ENCODE measurements at regions of chr10 and their contacts with region 1.

Region 1: DNA sequence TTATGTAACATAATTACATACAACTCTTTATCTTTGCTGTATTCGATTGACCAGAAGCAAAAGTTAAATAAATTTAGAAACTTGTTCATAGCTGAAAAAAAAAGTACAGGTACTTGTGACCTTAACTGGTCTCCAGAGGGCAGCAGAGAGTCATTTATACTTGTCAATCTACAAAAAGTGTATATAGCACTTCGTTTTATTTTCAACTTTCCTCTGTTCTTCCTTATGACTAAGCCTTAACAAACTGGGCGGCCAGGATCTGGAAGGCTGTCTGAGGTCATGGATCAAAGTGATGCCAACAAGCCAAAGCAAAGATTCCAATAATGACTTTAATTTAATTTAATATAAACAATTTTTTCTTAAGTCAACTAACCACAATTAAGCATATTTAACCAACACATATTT is 29.8 kb downstream of the C10orf67 start:
- DNase-seq: peak; percentile 67
- H3K4me3 Mint-ChIP-seq: no peak overlapping the region
- H3K27ac Mint-ChIP-seq: no peak overlapping the region
- H3K4me1 Mint-ChIP-seq: no peaks in the 10 kb centered on the region
- H3K27me3 Mint-ChIP-seq: no peaks in the 10 kb centered on the region
- CTCF ChIP-seq: peak; percentile 34

Region 2: DNA sequence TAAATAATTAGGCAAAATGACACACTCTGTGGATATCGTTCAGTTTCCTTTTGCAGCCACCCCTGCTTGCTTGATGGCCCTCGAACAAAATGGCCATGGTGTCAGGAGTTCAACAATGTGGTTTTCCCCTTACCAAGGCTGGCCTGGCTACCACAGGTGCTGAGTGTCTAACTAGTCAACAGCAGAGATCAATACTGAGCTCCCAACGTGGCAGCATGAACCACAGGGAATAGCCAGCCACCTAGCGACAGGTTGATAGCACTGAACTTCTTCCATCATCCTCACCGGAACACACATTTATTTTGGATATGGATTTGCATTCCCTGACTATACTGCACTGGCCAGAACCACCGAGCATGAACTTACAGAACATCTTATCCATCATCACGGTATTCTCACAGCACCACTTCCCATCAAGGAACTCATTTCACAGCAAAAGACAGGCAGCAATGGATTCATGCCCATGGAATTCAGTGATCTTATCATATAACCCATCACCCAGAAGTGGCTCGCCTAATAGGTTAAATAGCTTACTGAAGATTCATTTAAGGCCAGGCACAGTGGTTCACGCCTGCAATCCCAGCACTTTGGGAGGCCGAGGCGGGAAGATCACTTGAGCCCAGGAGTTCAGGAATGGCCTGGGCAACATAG is 23.5 kb after region 1 on chr10:
- CTCF ChIA-PET with region 1: interaction called, 4 read pairs
- intact Hi-C with region 1: loop called (anchors 2 kb)
- DNase-seq: peak; percentile 69
- H3K4me3 Mint-ChIP-seq: no peak overlapping the region
- H3K27ac Mint-ChIP-seq: no peak overlapping the region
- H3K4me1 Mint-ChIP-seq: peaks cover 30% of the 10 kb centered on the region
- H3K27me3 Mint-ChIP-seq: no peaks in the 10 kb centered on the region
- CTCF ChIP-seq: peak; percentile 60

Region 3: GRCh38 chr10:23368816-23369640 is 54.2 kb after region 1 on chr10:
- CTCF ChIA-PET with region 1: no interaction called
- intact Hi-C with region 1: no loop called
- DNase-seq: no peak
- H3K4me3 Mint-ChIP-seq: no peak overlapping the region
- H3K27ac Mint-ChIP-seq: no peak overlapping the region
- H3K4me1 Mint-ChIP-seq: peaks cover 20% of the 10 kb centered on the region
- H3K27me3 Mint-ChIP-seq: no peaks in the 10 kb centered on the region
- CTCF ChIP-seq: no peak

Region 4: DNA sequence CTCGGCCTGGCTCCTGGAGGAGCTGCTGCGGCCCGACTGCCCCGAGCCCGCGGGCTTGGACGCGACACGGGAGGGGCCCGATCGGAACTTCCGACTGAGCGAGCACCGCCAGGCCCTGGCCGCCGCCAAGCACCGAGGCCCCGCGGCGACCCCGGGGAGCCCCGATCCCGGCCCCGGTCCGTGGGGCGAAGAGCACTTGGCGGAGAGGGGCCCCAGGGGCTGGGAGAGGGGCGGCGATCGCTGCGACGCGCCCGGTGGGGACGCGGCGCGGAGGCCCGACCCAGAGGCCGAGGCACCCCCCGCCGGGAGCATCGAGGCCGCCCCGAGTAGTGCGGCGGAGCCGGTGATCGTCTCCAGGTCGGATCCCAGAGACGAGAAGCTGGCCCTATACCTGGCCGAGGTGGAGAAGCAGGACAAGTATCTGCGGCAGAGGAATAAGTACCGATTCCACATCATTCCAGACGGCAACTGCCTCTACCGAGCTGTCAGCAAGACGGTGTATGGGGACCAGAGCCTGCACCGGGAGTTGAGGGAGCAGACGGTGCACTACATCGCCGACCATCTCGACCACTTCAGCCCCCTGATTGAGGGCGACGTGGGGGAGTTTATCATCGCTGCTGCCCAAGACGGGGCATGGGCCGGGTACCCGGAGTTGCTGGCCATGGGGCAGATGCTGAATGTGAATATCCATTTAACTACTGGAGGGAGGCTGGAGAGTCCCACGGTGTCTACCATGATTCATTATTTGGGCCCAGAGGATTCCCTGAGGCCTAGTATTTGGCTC is 125.3 kb after region 1 on chr10:
- CTCF ChIA-PET with region 1: no interaction called
- intact Hi-C with region 1: loop called (anchors 10 kb)
- DNase-seq: peak; percentile 35
- H3K4me3 Mint-ChIP-seq: peak overlapping the region; percentile 75
- H3K27ac Mint-ChIP-seq: no peak overlapping the region
- H3K4me1 Mint-ChIP-seq: peaks cover 10% of the 10 kb centered on the region
- H3K27me3 Mint-ChIP-seq: no peaks in the 10 kb centered on the region
- CTCF ChIP-seq: no peak